ENCODE measurements at regions of chr16 and their contacts with region 1.

Region 1: DNA sequence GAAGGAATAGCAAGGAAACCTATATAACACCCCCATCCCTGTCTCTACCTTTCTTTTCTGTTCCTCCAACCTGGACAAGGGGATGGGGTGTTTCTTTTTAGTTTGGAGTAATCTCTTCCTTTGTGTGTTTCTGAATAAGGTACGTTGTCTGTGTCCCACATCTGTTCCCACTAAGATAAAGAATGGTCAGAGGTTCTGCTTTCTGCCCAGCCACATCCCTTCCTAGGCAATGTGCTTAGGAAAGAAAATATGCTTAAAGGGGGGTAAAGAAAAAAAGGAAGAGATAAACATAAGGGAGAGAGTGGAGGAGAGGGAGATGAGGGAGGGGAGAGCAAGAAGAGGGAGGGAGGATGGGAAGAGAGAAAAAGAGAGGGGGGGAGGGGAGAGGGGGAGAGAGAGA is 35.1 kb downstream of the SLC6A2 start:
- DNase-seq: no peak
- ATAC-seq: no peak
- H3K4me3 ChIP-seq: no peak overlapping the region
- H3K27ac ChIP-seq: no peak overlapping the region
- H3K4me1 ChIP-seq: no peaks in the 10 kb centered on the region
- H3K27me3 ChIP-seq: peaks cover 0 to 4% (median 0%) of the 10 kb centered on the region in 9 donors
- CTCF ChIP-seq: no peak
- POLR2A ChIP-seq: no peak

Region 2: DNA sequence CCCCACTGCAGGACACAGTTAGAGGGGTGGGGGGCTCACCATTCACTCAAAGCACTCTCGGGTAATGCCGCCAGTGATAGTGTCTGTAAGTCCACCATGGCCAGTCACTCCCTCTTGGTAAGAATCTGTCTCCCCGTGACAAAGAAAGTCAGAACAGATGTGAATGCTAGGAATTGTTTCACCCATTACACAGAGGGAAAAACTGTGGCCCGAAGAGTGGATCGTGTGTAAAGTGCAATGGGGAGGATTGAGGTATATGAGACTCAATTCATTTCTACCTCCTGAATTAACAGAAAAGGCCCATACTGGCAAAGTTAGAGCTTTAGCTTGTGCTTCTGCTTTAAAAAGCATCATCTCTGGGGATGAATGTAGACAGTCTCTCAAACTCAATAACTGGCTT is 52.6 kb before region 1 on chr16:
- intact Hi-C with region 1: no loop called
- DNase-seq: no peak
- ATAC-seq: no peak
- H3K4me3 ChIP-seq: no peak overlapping the region
- H3K27ac ChIP-seq: no peak overlapping the region
- H3K4me1 ChIP-seq: no peaks in the 10 kb centered on the region
- H3K27me3 ChIP-seq: peaks cover 0 to 17% (median 0%) of the 10 kb centered on the region in 9 donors
- CTCF ChIP-seq: no peak
- POLR2A ChIP-seq: no peak

Region 3: GRCh38 chr16:55655860-55656695 is 34.8 kb before region 1 on chr16 and contains the start of gene SLC6A2:
- intact Hi-C with region 1: loop called in 1 of 10 experiments (anchors 5 kb)
- DNase-seq: peak in 1 of 5 donors; percentile 41
- ATAC-seq: peak in 3 of 4 donors; percentile 47 to 73 (median 49)
- H3K4me3 ChIP-seq: peak within 1 kb of the TSS; percentile 9 to 46 (median 30)
- H3K27ac ChIP-seq: no peak within 1 kb of the TSS
- H3K4me1 ChIP-seq: peaks cover 0 to 17% (median 7%) of the 10 kb centered on the region in 12 donors
- H3K27me3 ChIP-seq: peaks cover 20 to 68% (median 43%) of the 10 kb centered on the region in 9 donors
- CTCF ChIP-seq: peak in 2 of 12 donors; percentile 21 to 28
- POLR2A ChIP-seq: no peak
- total RNA-seq, gene SLC6A2: 0.18 TPM in 1 of 9 donors, not detected in the others

Measured in heart left ventricle (tissue), 16 donors.